Caco-2 (cell line): ENCODE measurements at regions of chr4 and their contacts with region 1.

Region 1: DNA sequence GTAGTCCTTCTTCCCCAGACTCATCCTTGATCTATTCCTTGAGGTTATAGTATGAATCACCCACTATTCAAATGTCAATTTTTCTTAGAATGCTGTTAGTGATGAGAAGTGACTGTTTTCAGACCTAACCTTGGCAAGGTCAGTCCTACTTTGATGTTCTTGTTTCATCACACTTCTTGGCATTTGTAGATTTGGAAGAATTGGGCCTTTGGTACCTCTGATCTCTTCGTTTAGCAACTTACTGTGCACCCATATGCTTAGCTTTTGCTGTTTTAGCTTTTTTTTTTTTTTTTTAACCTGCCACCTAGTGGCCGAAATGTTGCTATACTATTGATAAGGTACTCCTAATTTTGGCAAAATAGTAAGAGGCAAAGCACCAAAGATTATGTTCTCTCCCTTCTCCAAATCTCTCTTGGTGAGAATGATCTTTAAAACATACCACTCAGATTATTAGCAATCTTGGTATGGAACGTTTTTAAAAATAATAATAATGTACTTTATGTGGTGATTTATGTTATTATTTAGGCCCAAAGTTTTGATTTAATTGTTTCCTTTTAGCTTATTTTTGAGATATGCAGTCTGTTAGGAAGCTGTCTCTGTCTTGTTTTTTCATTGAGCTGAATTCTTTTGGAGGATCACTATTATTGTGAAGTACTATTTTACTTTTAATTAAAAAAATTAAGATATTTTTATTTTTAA is 16.6 kb downstream of the DCK start:
- DNase-seq: peak in 1 of 2 experiments; percentile 43
- H3K4me3 ChIP-seq: no peak overlapping the region
- H3K4me3 Mint-ChIP-seq: no peak overlapping the region
- H3K27ac Mint-ChIP-seq: no peak overlapping the region
- H3K4me1 ChIP-seq: no peaks in the 10 kb centered on the region
- H3K4me1 Mint-ChIP-seq: no peaks in the 10 kb centered on the region
- H3K27me3 ChIP-seq: no peaks in the 10 kb centered on the region
- H3K27me3 Mint-ChIP-seq: no peaks in the 10 kb centered on the region
- CTCF ChIP-seq: peak; percentile 53 to 68

Region 2: GRCh38 chr4:70651864-70652506 is 358.1 kb before region 1 on chr4:
- CTCF ChIA-PET with region 1: interaction called, 3 read pairs
- POLR2A ChIA-PET with region 1: no interaction called
- intact Hi-C with region 1: loop called (anchors 2 kb)
- DNase-seq: peak in 1 of 2 experiments; percentile 20
- H3K4me3 ChIP-seq: no peak overlapping the region
- H3K4me3 Mint-ChIP-seq: no peak overlapping the region
- H3K27ac Mint-ChIP-seq: no peak overlapping the region
- H3K4me1 ChIP-seq: peaks cover 3% of the 10 kb centered on the region; the same call in 1 of the 2 replicates
- H3K4me1 Mint-ChIP-seq: peaks cover 7% of the 10 kb centered on the region
- H3K27me3 ChIP-seq: no peaks in the 10 kb centered on the region
- H3K27me3 Mint-ChIP-seq: no peaks in the 10 kb centered on the region
- CTCF ChIP-seq: peak in 1 of 2 experiments; percentile 31

Region 3: DNA sequence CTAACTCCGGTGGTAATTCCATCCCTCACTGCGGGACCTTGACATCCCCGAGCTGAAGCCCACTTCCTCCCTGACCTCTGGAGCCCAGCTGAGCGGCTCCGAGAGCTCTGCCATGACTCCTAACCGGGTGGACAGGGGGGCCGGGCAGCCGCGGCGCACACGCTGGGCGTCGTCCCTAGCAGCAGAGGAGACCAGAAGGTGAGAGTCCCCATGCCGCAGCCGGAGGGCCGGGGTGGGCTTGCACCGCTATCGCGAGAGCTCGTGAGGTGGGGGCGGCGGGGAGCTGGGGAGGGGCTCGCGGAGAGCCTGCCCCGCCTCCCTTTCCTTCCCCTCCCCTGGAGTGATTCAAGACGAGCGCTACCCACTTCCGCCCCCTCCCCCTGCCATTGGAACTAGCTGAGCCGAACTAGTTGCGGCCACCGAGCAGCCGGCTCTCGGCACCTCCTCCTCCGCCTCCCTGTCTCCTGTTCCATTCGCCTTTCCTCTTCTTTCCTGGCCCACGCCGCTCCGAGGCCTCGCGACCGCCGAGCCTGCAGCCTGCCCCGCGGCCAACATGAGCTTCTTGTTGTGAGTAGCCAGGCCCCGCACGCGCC is 108.0 kb before region 1 on chr4 and contains the start of gene MOB1B:
- CTCF ChIA-PET with region 1: interaction called, 10 read pairs
- POLR2A ChIA-PET with region 1: no interaction called
- intact Hi-C with region 1: loop called (anchors 5 kb)
- DNase-seq: peak; percentile 88 to 91
- H3K4me3 ChIP-seq: peak within 1 kb of the TSS; percentile 55
- H3K4me3 Mint-ChIP-seq: peak within 1 kb of the TSS; percentile 97
- H3K27ac Mint-ChIP-seq: peak within 1 kb of the TSS; percentile 94
- H3K4me1 ChIP-seq: no peaks in the 10 kb centered on the region
- H3K4me1 Mint-ChIP-seq: peaks cover 7% of the 10 kb centered on the region
- H3K27me3 ChIP-seq: no peaks in the 10 kb centered on the region
- H3K27me3 Mint-ChIP-seq: no peaks in the 10 kb centered on the region
- CTCF ChIP-seq: peak; percentile 45 to 53
- total RNA-seq, gene MOB1B: 23.3 and 23.6 TPM in 2 replicates

Region 4: GRCh38 chr4:71050809-71051208 is 40.8 kb after region 1 on chr4:
- CTCF ChIA-PET with region 1: no interaction called
- POLR2A ChIA-PET with region 1: no interaction called
- intact Hi-C with region 1: no loop called
- DNase-seq: no peak
- H3K4me3 ChIP-seq: no peak overlapping the region
- H3K4me3 Mint-ChIP-seq: no peak overlapping the region
- H3K27ac Mint-ChIP-seq: no peak overlapping the region
- H3K4me1 ChIP-seq: no peaks in the 10 kb centered on the region
- H3K4me1 Mint-ChIP-seq: no peaks in the 10 kb centered on the region
- H3K27me3 ChIP-seq: no peaks in the 10 kb centered on the region
- H3K27me3 Mint-ChIP-seq: no peaks in the 10 kb centered on the region
- CTCF ChIP-seq: no peak

Region 5: DNA sequence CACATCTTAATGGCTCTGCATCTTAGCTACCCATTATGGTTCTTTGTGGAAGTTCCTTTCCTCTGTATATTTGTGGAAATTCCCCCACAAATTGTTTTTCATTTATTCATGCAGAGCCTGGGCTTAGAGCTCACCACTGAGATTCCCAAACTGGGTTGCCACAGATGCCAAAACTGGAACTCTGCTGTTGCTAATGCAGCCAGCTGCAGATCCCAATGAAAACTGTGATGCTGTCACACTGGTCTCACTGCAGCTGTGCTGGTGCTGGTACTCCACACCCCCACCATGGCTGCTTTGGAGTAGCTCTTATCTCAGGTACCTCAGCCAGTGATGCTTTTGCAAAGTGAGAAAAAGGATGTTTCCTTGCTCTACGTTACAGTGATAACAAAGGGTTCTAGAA is 71.2 kb after region 1 on chr4:
- CTCF ChIA-PET with region 1: no interaction called
- POLR2A ChIA-PET with region 1: no interaction called
- intact Hi-C with region 1: no loop called
- DNase-seq: no peak
- H3K4me3 ChIP-seq: no peak overlapping the region
- H3K4me3 Mint-ChIP-seq: no peak overlapping the region
- H3K27ac Mint-ChIP-seq: no peak overlapping the region
- H3K4me1 ChIP-seq: no peaks in the 10 kb centered on the region
- H3K4me1 Mint-ChIP-seq: no peaks in the 10 kb centered on the region
- H3K27me3 ChIP-seq: no peaks in the 10 kb centered on the region
- H3K27me3 Mint-ChIP-seq: no peaks in the 10 kb centered on the region
- CTCF ChIP-seq: no peak